ENCODE measurements at regions of chr1 and their contacts with region 1.

Region 1: DNA sequence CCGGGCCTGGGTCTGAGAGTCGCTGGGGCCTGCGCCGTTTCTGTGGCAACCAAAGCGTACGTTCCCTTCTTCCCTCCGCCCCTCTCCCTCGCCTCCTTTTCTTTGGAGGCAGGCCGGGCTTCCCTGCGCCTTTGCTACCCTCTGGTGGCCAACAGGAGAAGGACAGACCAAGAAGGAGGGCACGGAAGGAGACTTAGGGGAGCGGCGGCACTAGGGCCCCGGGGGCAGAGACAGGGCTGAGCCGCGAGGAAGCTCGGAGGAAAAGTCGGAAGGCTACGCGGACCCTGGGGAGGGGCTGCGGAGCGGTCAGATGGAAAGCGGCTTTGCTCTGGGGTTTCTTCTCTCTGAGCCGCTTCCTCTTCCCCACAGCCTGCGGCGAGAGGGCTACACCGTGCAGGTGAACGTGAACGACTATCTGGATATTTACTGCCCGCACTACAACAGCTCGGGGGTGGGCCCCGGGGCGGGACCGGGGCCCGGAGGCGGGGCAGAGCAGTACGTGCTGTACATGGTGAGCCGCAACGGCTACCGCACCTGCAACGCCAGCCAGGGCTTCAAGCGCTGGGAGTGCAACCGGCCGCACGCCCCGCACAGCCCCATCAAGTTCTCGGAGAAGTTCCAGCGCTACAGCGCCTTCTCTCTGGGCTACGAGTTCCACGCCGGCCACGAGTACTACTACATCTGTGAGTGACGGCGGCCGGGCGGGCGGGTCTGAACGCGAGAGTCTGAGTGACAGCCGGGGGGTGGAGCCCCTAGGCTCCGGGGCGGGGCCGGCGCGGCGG is 6.3 kb downstream of the EFNA3 start:
- DNase-seq: peak; percentile 89 to 97 (median 94)
- ATAC-seq: peak; percentile 87 to 93 (median 88)
- H3K4me3 ChIP-seq: peak overlapping the region; percentile 32 to 77 (median 71)
- H3K27ac ChIP-seq: peak overlapping the region; percentile 73 to 91 (median 79)
- H3K4me1 ChIP-seq: peaks cover 27 to 34% (median 30%) of the 10 kb centered on the region in 3 donors
- H3K27me3 ChIP-seq: peaks cover 0 to 31% (median 6%) of the 10 kb centered on the region in 4 donors
- CTCF ChIP-seq: peak; percentile 79 to 93 (median 90)

Region 2: DNA sequence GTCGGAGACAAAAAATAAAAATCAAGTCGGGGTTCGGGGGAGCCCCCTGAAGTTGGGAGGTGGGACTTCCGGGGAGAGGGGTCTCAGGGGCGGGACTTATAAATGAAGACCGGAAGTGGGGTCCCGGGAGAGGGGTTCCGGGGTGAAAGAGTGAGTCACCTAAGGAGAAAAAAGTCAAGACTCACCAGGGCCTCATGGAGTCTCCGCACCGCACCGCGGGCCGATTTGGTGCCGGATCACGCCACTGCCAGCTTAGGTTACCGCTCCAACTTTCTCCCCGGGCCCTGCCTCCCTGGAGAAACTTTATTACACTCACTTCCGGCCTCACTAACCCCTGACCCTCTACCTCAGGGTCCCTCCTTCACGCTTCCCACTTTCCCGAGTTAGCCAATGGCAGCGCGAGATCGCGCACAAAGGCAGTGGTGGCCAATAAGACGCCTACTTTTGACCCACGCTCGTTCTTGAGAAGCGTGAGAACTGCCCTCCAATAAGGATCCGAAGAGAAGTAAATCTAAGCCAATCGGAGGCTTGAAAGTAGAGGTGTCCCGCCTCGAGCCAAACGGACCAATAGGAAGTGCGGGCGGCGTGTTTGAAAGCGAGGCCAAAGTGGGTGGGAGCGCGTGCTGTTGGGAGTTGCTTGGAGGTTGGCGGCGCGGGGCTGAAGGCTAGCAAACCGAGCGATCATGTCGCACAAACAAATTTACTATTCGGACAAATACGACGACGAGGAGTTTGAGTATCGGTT is 110.7 kb before region 1 on chr1 and contains the start of gene CKS1B:
- intact Hi-C with region 1: no loop called
- DNase-seq: peak; percentile 90 to 98 (median 98)
- ATAC-seq: peak; percentile 81 to 88 (median 84)
- H3K4me3 ChIP-seq: peak within 1 kb of the TSS; percentile 45 to 73 (median 58)
- H3K27ac ChIP-seq: peak within 1 kb of the TSS; percentile 90 to 98 (median 96)
- H3K4me1 ChIP-seq: peaks cover 12 to 26% (median 22%) of the 10 kb centered on the region in 3 donors
- H3K27me3 ChIP-seq: no peaks in the 10 kb centered on the region
- CTCF ChIP-seq: no peak
- total RNA-seq, gene CKS1B: 6.7 to 12.0 (median 10.2) TPM

Region 3: GRCh38 chr1:155044812-155045690 is 39.9 kb before region 1 on chr1:
- intact Hi-C with region 1: loop called in 1 of 3 experiments (anchors 5 kb)
- DNase-seq: peak; percentile 77 to 94 (median 90)
- ATAC-seq: peak; percentile 97 to 99 (median 98)
- H3K4me3 ChIP-seq: no peak overlapping the region
- H3K27ac ChIP-seq: peak overlapping the region in 2 of 4 donors; percentile 24 to 70
- H3K4me1 ChIP-seq: peaks cover 0 to 12% (median 4%) of the 10 kb centered on the region in 3 donors
- H3K27me3 ChIP-seq: no peaks in the 10 kb centered on the region
- CTCF ChIP-seq: peak; percentile 59 to 79 (median 66)